AG04449 (cell line): ENCODE measurements at regions of chr2 and their contacts with region 1.

Region 1: DNA sequence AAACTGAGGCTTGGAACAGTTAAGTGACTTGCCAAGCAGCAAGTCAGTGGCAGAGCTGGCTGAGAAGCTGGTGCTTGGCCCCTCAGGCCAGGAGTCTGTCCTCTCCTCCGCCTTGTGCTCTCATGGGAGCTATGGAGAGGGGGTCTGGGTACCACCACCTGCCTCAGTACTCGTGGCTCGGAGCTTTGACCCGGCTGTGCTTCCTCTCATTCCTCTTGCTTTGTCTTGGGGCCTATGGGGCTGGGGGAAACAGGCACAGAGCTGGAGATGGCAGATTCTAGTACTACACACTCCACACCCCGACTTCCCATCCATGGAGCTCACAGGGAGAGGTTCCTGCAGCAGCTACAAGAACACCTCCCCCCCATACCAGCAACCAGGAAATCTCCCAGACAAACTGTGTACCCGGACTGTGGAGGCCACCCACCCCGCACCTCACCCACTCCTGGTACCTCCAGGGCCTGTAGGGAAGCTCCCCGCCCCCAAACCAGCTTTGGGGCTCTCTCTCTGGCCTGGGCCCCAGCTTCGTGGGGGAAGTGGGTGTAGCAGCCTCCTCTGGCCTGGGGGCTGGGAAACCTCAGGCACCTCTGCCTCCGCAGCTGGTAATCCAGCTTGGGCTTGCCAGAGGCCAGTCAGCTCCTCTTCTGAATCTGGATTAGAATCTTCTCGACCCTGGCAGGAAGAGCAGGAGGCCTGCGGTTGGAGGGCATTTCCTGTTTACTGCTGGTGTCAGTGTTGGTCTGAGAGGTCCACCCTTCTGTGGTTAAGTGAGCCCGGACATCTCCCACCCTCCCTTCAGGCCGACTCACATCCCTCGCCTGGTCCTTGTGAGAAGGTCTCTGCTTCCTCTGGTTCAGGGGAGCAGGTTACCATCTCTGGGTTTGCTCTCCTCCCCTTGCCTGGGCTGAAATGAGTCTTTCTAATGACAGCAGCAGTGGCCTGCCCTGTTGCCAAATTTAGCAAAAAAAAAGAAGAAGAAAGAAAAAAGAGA is 22.3 kb upstream of the RHOB start:
- DNase-seq: no peak
- H3K4me3 ChIP-seq: no peak overlapping the region
- CTCF ChIP-seq: no peak

Region 2: DNA sequence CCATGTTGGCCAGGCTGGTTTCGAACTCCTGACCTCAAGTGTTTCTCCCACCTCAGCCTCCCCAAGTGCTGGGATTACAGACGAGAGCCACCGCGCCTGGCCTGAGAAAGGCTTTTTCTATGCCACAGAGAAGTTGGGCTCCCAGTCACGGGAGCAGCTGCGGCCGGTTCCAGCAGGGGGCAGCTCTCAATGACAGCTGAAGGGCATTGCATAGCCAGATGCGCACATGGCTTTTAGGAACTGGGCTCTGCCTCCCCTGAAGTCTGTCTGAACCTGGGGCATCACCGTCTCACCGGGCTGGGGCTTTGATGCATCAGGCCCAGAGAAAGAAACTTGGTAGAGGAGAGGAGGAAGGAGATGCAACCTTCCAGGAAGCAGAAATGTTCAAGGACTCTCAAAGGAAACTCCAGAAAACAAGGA is 289.0 kb before region 1 on chr2:
- CTCF ChIA-PET with region 1: no interaction called
- POLR2A ChIA-PET with region 1: no interaction called
- DNase-seq: no peak
- H3K4me3 ChIP-seq: no peak overlapping the region
- CTCF ChIP-seq: peak; percentile 92

Region 3: DNA sequence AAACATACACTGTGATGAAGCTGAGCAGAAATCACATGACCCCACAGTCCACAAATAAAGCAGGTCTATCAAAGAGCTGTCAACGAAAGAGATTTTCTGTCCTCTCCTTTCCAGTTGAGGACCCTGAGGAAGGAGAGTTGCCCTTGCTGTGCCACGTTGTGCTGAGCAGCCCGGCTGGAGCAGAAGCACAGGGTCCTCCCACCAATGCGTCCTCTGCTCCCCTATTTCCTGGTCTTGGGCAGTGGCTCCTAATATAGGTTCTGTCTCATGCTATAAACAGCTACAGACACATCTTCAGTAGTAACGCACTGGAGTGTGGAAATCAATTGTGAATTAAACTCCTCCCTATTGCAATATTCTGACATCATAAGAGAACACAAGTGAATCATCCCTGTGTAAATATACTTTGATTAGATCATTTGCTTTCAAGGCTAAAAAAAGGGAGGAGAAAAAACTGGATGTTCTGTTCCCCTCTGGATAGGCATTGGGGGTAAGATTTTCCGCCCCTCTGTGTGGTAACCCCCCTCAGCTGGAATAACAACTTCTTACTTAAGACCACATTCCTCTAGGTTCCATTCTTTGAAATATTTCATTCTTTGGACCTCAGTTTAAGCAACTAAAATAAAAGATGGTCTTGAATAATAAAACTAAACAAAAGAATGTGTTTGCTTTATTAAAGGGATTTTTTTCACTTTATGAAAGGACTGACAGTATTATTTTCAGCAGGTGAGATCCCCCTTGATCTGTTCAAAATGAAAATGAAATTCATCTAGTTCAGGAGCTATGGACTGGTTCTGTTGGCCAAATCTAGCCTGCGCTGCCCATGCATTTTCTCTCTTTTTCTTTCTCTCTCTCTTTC is 14.0 kb after region 1 on chr2:
- CTCF ChIA-PET with region 1: interaction called, 26 read pairs
- POLR2A ChIA-PET with region 1: no interaction called
- DNase-seq: peak; percentile 46
- H3K4me3 ChIP-seq: no peak overlapping the region
- CTCF ChIP-seq: no peak

Region 4: GRCh38 chr2:20551260-20551944 is 126.8 kb after region 1 on chr2:
- CTCF ChIA-PET with region 1: no interaction called
- POLR2A ChIA-PET with region 1: no interaction called
- DNase-seq: no peak
- H3K4me3 ChIP-seq: no peak overlapping the region
- CTCF ChIP-seq: no peak

Region 5: GRCh38 chr2:20970068-20970467 is 545.5 kb after region 1 on chr2:
- CTCF ChIA-PET with region 1: no interaction called
- POLR2A ChIA-PET with region 1: no interaction called
- DNase-seq: no peak
- H3K4me3 ChIP-seq: no peak overlapping the region
- CTCF ChIP-seq: no peak